ENCODE measurements at regions of chr12 and their contacts with region 1.

Region 1: GRCh38 chr12:8078398-8078797 is 3.7 kb upstream of the NECAP1 start:
- DNase-seq: peak; percentile 79
- H3K4me3 Mint-ChIP-seq: peak overlapping the region; percentile 25
- H3K27ac Mint-ChIP-seq: peak overlapping the region; percentile 26
- H3K4me1 Mint-ChIP-seq: peaks cover 41% of the 10 kb centered on the region
- H3K27me3 Mint-ChIP-seq: no peaks in the 10 kb centered on the region

Region 2: DNA sequence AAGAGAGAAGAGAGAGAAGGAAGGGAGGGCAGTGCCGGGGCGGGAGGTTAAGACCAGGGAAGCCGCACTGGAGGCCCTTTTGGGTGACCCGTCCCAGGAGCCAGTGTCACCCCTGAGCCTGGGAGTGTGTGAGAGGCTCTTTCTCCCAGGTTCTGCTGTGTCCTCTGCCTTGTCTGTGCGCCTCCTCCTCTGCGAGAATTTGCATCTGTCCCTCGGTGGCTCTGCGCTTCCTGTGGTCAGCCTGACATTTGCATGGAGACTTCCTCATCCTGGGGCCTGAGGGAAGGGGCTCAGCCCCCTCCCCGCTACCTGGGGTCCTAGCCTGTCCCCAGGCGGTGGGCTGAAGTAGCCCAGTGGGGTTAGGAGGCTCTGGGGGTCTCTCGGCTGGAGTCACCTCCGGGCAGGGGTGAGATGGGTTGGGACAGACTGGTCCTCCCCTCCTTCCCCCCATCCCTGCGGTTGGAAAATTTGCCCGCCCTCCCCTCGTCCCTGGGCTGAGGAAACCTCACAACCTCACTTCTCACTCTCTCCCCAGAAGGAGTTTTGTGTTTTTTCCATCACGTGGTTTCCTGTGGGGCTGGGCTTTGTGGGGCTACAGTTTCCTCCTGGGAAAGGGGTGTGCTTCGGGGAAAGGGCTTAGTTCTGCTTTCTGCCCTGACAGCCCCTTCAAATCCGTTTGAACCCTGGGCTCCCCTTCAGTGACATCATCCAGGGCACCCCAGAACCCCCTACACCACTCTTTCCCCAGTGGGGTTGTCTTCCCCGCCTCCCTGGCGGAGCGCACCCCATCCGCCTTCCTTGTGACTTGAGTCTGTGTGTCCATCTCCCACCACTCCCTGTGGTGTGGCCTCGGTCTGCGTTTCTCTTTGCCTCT is 1124.7 kb before region 1 on chr12:
- CTCF ChIA-PET with region 1: no interaction called
- intact Hi-C with region 1: loop called (anchors 10 kb)
- DNase-seq: peak; percentile 87
- H3K4me3 Mint-ChIP-seq: peak overlapping the region; percentile 98
- H3K27ac Mint-ChIP-seq: peak overlapping the region; percentile 93
- H3K4me1 Mint-ChIP-seq: peaks cover 69% of the 10 kb centered on the region
- H3K27me3 Mint-ChIP-seq: no peaks in the 10 kb centered on the region

Region 3: GRCh38 chr12:7832059-7832696 is 246.2 kb before region 1 on chr12:
- CTCF ChIA-PET with region 1: no interaction called
- intact Hi-C with region 1: loop called (anchors 5 kb)
- DNase-seq: peak; percentile 31
- H3K4me3 Mint-ChIP-seq: no peak overlapping the region
- H3K27ac Mint-ChIP-seq: no peak overlapping the region
- H3K4me1 Mint-ChIP-seq: no peaks in the 10 kb centered on the region
- H3K27me3 Mint-ChIP-seq: no peaks in the 10 kb centered on the region

Region 4: DNA sequence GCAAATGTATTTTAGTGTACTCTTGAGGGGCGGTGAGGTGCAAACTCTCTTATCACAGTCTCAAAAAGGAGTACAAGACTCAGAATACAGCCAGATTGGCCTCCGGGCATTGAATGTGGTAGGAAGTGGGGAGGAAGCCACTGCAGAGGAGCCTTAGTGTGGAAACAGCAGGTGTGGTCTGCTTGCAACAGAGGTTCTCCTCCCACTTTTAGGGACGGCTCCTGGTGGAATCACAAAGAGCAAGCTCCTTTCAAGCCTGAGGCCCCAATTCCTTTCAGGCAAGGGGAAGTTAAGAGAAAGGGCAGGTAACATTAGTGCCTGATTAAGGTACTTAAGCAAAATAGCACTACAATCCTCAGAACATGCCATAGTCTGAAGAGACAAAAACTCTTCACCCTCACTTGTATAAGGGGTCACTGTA is 118.7 kb before region 1 on chr12:
- CTCF ChIA-PET with region 1: no interaction called
- intact Hi-C with region 1: loop called (anchors 1 kb)
- DNase-seq: peak; percentile 68
- H3K4me3 Mint-ChIP-seq: peak overlapping the region; percentile 86
- H3K27ac Mint-ChIP-seq: peak overlapping the region; percentile 93
- H3K4me1 Mint-ChIP-seq: peaks cover 37% of the 10 kb centered on the region
- H3K27me3 Mint-ChIP-seq: no peaks in the 10 kb centered on the region

Region 5: DNA sequence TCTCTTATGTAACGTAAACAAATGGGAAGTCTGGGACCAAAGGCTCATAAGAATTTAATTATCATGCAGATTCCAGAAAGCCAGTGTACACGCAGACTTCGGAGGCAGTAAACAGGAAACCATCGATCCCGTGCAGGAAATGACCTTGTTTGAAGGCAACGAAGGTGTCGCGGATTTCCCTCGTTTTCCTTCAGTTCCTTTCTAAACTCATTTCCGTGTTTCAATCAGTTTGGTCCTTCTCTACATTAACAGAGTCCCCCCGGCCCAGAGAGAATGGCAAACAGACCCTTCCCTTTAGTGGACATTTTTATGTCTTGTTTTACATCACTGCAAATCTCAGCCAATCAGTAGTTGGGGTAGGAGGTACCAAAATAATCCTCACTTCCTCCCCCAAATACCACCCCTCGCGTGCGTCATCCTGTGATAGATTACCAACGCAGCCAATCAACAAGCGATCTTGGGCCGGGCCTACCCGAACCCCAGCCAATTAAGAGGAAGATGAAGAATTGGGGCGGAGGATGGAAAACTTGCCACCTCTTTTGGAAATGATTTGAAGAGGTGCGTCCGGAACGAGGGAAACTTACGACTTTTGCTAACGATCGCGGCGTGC is 52.0 kb before region 1 on chr12:
- CTCF ChIA-PET with region 1: interaction called, 3 read pairs
- intact Hi-C with region 1: loop called (anchors 1 kb)
- DNase-seq: peak; percentile 99
- H3K4me3 Mint-ChIP-seq: peak overlapping the region; percentile 94
- H3K27ac Mint-ChIP-seq: peak overlapping the region; percentile 100
- H3K4me1 Mint-ChIP-seq: peaks cover 11% of the 10 kb centered on the region
- H3K27me3 Mint-ChIP-seq: no peaks in the 10 kb centered on the region

Region 6: DNA sequence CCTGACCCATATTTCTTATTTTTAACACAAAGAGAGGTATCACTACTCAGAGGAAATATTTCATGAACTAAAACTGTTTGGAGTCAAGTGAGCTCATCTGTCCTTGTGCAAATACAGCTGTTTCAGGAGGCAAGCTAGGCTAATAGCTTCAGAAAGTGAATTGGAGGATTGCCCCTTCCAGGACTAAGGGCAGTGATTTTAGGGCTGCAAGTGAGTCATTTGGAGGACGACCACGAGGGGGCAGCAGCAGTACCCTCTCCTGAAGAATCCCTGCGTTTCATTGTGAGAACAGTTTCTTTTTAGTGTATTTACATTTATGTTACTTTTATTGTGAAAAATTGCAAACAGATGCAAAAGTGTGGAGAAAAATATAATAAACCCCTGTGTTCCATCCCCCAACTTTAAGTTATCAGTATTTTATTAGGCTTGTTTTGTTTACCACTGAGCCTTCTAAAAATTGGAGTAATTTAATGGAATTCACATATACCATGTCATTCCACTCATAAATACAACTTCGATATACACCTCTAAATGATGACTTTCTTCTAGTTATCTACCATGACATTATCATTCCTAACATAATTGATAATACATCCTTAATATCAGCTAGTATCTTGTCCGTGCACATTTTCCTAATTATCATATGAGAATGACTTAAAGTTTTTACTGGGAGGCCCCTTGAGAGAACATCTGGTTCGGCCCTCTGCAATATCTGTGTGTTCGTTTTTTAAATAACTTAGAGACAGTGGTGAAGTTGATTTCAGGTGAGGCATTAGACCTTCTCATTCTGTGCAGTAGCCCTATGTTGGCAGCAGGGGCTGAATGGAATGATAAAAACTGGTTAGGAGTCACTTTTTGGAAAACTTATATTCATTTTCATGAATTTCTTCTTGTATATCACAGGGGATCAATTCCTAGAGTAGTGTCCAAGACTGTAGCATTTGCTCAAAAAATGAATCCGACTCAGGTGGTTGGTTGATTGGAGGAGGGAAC is 32.1 kb before region 1 on chr12:
- CTCF ChIA-PET with region 1: interaction called, 205 read pairs
- intact Hi-C with region 1: loop called (anchors 1 kb)
- DNase-seq: peak; percentile 91
- H3K4me3 Mint-ChIP-seq: no peak overlapping the region
- H3K27ac Mint-ChIP-seq: no peak overlapping the region
- H3K4me1 Mint-ChIP-seq: peaks cover 18% of the 10 kb centered on the region
- H3K27me3 Mint-ChIP-seq: no peaks in the 10 kb centered on the region